ENCODE measurements at regions of chr17 and their contacts with region 1.

Region 1: GRCh38 chr17:19977311-19978208 is at the start of gene AKAP10:
- DNase-seq: peak; percentile 87 to 98 (median 94)

Region 2: DNA sequence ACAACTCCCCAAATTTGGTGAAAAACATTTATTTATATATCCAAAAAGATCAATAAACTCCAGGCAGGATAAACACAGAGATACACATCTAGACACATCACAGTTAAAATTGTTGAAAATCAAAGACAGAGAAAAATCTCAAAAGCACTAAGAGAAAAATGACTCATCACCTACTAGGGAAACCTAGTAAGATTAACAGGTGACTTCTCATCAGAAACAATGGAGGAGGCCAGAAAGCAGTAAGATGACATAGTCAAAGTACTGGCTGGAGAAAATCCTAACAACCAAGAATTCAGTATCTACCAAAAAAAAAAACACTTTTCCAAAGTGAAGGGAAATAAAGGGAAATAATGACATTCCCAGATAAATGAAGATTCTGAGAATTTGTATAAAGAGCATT is 143.6 kb before region 1 on chr17:
- intact Hi-C with region 1: no loop called
- DNase-seq: no peak

Region 3: DNA sequence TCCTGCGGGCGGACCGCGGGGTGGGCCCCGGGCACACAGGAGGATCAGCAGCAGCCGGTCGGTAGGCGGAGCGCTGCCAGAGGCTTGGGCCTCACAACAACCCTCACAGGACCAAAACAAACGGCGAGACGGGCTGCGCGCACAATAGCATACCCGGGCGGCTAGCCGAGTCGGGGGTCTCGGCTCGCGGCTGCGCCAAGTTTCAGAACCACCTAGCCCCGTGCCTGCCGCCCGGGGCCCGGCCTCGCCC is 110.6 kb before region 1 on chr17:
- intact Hi-C with region 1: loop called (anchors 10 kb)
- DNase-seq: peak; percentile 59 to 88 (median 76)

Region 4: GRCh38 chr17:20103454-20104446 is 126.2 kb after region 1 on chr17:
- intact Hi-C with region 1: no loop called
- DNase-seq: peak in 12 of 42 donors; percentile 27 to 73 (median 35)